SK-N-SH (cell line): ENCODE measurements at regions of chrX and their contacts with region 1.

Region 1: DNA sequence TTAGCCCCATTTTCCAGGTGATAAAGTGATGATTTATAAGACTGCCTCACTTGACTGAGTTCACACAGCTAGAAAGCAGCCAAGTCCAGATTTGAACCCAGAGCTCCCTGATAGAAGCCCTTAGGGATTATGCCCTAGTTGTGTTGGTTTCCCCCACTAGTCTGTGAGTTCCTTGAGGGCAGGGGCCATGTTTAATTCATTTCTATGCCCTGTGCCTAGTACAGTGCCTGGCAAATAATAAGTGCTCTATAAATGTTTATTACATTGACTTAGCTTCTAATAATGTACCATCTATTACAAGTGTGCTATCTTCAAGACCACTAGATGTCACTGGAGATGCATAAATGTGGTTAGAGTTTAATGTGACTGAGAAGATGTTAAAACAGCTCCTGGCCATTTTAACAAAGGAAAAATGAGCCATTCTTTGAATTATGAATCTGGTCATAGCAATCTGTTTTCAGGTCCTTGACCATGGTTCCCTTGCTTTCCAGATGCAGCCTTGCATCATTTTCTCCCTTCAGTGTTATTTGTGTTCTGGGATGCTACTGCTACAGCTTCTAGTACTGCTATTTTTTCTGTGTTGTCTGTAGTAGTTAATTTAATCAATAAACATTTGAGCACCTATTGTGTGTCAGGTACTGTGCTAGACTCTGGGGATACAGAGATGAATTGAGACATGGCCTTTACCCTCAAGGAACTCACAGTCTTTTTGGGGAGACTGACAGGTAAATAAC is 43.2 kb downstream of the SLC9A6 start:
- DNase-seq: peak; percentile 47
- H3K4me3 ChIP-seq: no peak overlapping the region
- H3K27ac ChIP-seq: no peak overlapping the region
- H3K4me1 ChIP-seq: no peaks in the 10 kb centered on the region
- H3K27me3 ChIP-seq: no peaks in the 10 kb centered on the region
- CTCF ChIP-seq: peak; percentile 84
- EP300 ChIP-seq: no peak
- RAD21 ChIP-seq: peak; percentile 88

Region 2: GRCh38 chrX:135373357-135373756 is 655.1 kb before region 1 on chrX:
- CTCF ChIA-PET with region 1: no interaction called
- POLR2A ChIA-PET with region 1: no interaction called
- DNase-seq: no peak
- H3K4me3 ChIP-seq: no peak overlapping the region
- H3K27ac ChIP-seq: no peak overlapping the region
- H3K4me1 ChIP-seq: no peaks in the 10 kb centered on the region
- H3K27me3 ChIP-seq: no peaks in the 10 kb centered on the region
- CTCF ChIP-seq: no peak
- EP300 ChIP-seq: no peak
- RAD21 ChIP-seq: no peak

Region 3: DNA sequence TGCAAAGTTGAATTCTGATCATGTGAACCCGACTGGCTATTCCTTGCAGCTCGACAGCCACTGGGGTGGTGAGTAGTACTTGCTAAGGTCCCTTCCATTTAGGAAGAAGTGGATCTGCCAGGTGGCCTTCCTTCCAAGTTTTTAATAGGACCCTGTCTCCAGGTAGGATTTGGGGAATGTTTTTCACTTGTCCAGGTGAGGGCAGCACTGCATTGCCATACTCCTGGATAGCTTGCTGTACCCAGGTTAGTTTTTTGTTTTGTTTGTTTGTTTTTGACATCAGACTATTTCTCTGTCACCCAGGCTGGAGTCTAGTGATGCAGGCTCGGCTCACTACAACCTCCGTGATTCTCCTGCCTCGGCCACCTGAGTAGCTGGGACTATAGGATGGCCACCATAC is 105.1 kb before region 1 on chrX:
- CTCF ChIA-PET with region 1: no interaction called
- POLR2A ChIA-PET with region 1: no interaction called
- DNase-seq: no peak
- H3K4me3 ChIP-seq: no peak overlapping the region
- H3K27ac ChIP-seq: no peak overlapping the region
- H3K4me1 ChIP-seq: no peaks in the 10 kb centered on the region
- H3K27me3 ChIP-seq: peaks cover 43% of the 10 kb centered on the region
- CTCF ChIP-seq: peak; percentile 39
- EP300 ChIP-seq: no peak
- RAD21 ChIP-seq: no peak

Region 4: DNA sequence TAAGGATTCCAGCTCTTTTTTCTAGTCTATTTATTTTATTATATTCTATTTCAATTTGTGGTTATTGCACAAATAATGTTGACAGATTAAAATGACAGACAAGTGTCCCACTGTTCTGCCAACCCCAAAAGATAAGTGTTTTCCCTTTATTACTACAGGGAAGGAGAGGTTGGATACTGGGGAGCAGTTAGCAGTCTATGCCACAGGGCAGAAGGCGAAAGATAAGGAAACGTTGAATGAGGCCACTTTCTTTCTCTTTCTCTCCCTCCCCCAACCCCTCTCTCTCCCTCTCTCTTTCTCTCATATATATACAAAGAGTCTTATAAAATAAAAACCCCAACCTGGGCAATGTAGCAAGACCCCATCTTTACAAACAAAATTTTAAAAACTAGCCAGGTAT is 11.5 kb before region 1 on chrX:
- CTCF ChIA-PET with region 1: interaction called, 18 read pairs
- POLR2A ChIA-PET with region 1: no interaction called
- DNase-seq: no peak
- H3K4me3 ChIP-seq: no peak overlapping the region
- H3K27ac ChIP-seq: no peak overlapping the region
- H3K4me1 ChIP-seq: no peaks in the 10 kb centered on the region
- H3K27me3 ChIP-seq: no peaks in the 10 kb centered on the region
- CTCF ChIP-seq: no peak
- EP300 ChIP-seq: no peak
- RAD21 ChIP-seq: no peak

Region 5: GRCh38 chrX:136055651-136056221 is 27.3 kb after region 1 on chrX:
- CTCF ChIA-PET with region 1: interaction called, 12 read pairs
- POLR2A ChIA-PET with region 1: no interaction called
- DNase-seq: no peak
- H3K4me3 ChIP-seq: peak overlapping the region in 1 of 2 experiments; percentile 10; a peak in 1 of 4 replicates
- H3K27ac ChIP-seq: peak overlapping the region in 1 of 2 experiments; percentile 81; a peak in 2 of 4 replicates
- H3K4me1 ChIP-seq: no peaks in the 10 kb centered on the region
- H3K27me3 ChIP-seq: no peaks in the 10 kb centered on the region; the same call in 1 of the 2 replicates
- CTCF ChIP-seq: no peak
- EP300 ChIP-seq: 0 out of 4 replicates have a peak, but pooled peaks of 1 of the 2 experiments have one; percentile 19
- RAD21 ChIP-seq: no peak

Region 6: DNA sequence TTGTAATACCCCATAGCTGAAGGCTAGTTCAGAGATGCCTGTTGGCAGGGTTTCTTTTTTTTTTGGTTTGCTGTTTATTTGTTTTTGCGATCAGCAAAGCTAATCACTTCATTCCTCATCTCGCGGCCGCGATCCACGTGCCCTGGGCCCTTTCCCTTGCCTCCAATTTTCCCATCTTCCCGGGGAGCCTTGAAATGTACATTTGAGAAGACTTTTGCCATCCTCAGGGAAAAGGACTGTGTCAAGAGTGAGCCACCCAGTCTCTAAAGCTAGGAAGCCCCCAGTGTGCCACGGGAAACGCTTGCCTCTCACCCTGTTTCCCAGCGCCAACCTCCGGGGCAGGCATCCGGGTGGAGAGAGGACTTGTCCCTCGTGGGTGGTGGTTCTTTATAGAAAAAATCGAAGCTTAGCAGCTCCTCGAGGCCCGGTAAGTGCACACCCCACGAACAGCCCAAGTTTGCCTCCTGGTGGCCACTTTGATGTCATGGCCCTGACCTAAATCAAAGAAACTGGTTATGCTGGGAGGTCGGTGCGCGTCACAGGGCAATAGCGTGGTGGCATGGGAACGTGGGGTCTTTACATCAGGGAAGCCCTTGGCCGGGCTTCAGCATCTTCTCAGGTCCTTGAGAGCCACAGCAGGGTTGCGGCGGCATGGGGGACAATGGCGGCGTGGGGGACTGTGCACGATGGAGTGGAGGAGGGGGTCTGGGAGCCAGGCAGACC is 180.8 kb after region 1 on chrX:
- CTCF ChIA-PET with region 1: interaction called, 42 read pairs
- POLR2A ChIA-PET with region 1: interaction called, 3 read pairs
- DNase-seq: peak; percentile 62
- H3K4me3 ChIP-seq: no peak overlapping the region
- H3K27ac ChIP-seq: no peak overlapping the region
- H3K4me1 ChIP-seq: no peaks in the 10 kb centered on the region
- H3K27me3 ChIP-seq: peaks cover 6% of the 10 kb centered on the region; the same call in 1 of the 2 replicates
- CTCF ChIP-seq: peak; percentile 67
- EP300 ChIP-seq: no peak
- RAD21 ChIP-seq: peak; percentile 68

Region 7: GRCh38 chrX:136577552-136577951 is 549.1 kb after region 1 on chrX:
- CTCF ChIA-PET with region 1: interaction called, 14 read pairs
- POLR2A ChIA-PET with region 1: no interaction called
- DNase-seq: peak; percentile 36
- H3K4me3 ChIP-seq: no peak overlapping the region
- H3K27ac ChIP-seq: peak overlapping the region in 1 of 2 experiments; percentile 89; a peak in 1 of 4 replicates
- H3K4me1 ChIP-seq: peaks cover 0 to 4% of the 10 kb centered on the region in 2 experiments; a peak in 1 of 4 replicates
- H3K27me3 ChIP-seq: no peaks in the 10 kb centered on the region; the same call in 1 of the 2 replicates
- CTCF ChIP-seq: peak; percentile 73
- EP300 ChIP-seq: no peak
- RAD21 ChIP-seq: peak; percentile 69